Esophagus muscularis mucosa (tissue), 4 donors: ENCODE measurements at regions of chr10 and their contacts with region 1.

Region 1: GRCh38 chr10:77756319-77757232 is 119.0 kb upstream of the KCNMA1 start:
- DNase-seq: no peak
- H3K4me3 ChIP-seq: no peak overlapping the region
- H3K27ac ChIP-seq: no peak overlapping the region
- H3K4me1 ChIP-seq: peaks cover 0 to 8% (median 2%) of the 10 kb centered on the region in 4 donors
- H3K27me3 ChIP-seq: no peaks in the 10 kb centered on the region
- CTCF ChIP-seq: peak; percentile 52 to 64 (median 61)
- EP300 ChIP-seq: no peak
- POLR2A ChIP-seq: no peak

Region 2: DNA sequence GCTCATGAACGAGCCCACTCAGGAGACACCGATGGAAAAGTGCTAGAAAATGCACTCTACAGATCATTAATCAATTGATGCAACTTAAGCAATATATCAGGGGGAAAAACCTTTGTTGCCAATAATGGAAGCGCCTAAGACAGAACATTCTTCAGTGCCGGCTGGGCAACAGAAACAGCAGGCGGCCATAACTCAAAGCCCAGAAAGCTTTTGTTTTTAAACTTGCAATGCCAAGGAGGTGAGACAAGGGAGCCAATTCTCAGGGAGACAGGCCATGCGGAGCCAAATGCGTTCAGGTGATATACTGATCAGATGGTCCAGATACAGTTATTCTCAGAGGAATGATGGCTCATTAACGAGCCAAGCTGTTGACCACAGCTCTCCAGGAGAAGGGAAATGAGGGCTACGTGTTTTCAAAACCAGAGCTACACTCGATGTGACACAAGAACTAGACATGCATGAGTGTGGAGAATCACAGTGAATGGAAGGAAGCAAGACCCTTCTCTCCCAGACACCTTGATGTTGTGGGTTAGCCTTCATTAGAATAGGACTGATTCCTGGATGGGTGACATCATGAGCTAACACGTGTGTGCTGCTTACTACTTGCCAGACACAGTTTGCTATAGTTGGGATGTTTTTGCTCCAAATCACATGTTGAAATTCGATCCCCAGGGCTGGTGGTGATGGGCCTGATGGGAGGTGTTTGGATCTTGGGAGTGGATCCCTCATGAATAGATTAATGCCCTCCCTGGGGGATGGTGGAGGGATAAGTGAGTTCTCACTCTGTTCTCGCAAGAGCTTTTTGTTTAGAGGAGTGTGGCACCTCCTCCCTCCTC is 39.9 kb before region 1 on chr10:
- intact Hi-C with region 1: loop called (anchors 2 kb)
- DNase-seq: peak; percentile 85
- H3K4me3 ChIP-seq: no peak overlapping the region
- H3K27ac ChIP-seq: no peak overlapping the region
- H3K4me1 ChIP-seq: peaks cover 0 to 2% (median 1%) of the 10 kb centered on the region in 4 donors
- H3K27me3 ChIP-seq: peaks cover 0 to 12% (median 0%) of the 10 kb centered on the region in 4 donors
- CTCF ChIP-seq: no peak
- EP300 ChIP-seq: no peak
- POLR2A ChIP-seq: no peak